ENCODE measurements at regions of chr1 and their contacts with region 1.

Region 1: GRCh38 chr1:178725603-178726517 is 816 bp downstream of the RALGPS2 start:
- DNase-seq: peak; percentile 88
- ATAC-seq: peak; percentile 80
- H3K4me3 ChIP-seq: peak overlapping the region; percentile 93
- H3K27ac ChIP-seq: peak overlapping the region; percentile 76
- H3K4me1 ChIP-seq: peaks cover 24% of the 10 kb centered on the region
- H3K27me3 ChIP-seq: no peaks in the 10 kb centered on the region
- CTCF ChIP-seq: no peak; the same call in 1 of the 2 replicates

Region 2: DNA sequence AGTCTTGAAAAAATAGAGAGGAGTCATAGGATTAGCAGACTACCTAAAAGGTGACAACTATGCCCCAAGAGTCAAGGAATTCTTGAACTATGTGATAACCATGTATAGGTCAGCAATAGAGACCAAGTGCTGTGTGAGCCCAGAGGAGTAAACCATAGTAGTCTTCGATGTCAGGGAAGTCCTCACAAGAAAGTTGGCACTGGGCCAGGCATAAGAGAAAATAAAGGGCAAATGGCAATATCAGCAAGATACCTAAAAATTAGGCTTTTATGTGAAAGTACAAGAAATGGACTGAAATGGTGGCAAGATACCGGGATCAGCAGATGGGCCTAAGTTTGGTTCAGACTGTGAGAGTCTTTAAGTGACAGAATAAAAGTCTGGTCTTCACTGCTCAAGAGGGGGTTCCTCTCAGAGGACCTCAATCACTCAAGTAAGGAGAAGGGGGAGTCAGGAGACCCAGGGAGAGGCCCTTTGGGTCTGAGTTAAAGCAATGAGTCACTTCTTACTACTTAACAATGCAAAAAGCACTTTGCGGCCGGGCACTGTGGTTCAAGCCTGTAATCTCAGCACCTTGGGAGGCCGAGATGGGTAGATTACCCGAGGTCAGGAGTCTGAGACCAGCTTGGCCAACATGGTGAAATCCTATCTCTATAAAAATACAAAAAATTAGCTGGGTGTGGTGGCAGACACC is 118.0 kb before region 1 on chr1:
- CTCF ChIA-PET with region 1: no interaction called
- POLR2A ChIA-PET with region 1: interaction called, 16 read pairs
- intact Hi-C with region 1: loop called (anchors 2 kb)
- DNase-seq: no peak
- ATAC-seq: no peak
- H3K4me3 ChIP-seq: no peak overlapping the region
- H3K27ac ChIP-seq: peak overlapping the region; percentile 97
- H3K4me1 ChIP-seq: peaks cover 52% of the 10 kb centered on the region
- H3K27me3 ChIP-seq: no peaks in the 10 kb centered on the region
- CTCF ChIP-seq: no peak

Region 3: GRCh38 chr1:178650934-178651511 is 74.8 kb before region 1 on chr1:
- CTCF ChIA-PET with region 1: interaction called, 4 read pairs
- POLR2A ChIA-PET with region 1: interaction called, 18 read pairs
- intact Hi-C with region 1: loop called (anchors 1 kb)
- DNase-seq: peak; percentile 85
- ATAC-seq: peak; percentile 70
- H3K4me3 ChIP-seq: no peak overlapping the region
- H3K27ac ChIP-seq: peak overlapping the region; percentile 95
- H3K4me1 ChIP-seq: peaks cover 57% of the 10 kb centered on the region
- H3K27me3 ChIP-seq: no peaks in the 10 kb centered on the region
- CTCF ChIP-seq: no peak

Region 4: GRCh38 chr1:178684542-178685000 is 41.3 kb before region 1 on chr1:
- CTCF ChIA-PET with region 1: no interaction called
- POLR2A ChIA-PET with region 1: interaction called, 3 read pairs
- intact Hi-C with region 1: loop called (anchors 5 kb)
- DNase-seq: peak; percentile 90
- ATAC-seq: peak; percentile 88
- H3K4me3 ChIP-seq: no peak overlapping the region
- H3K27ac ChIP-seq: peak overlapping the region; percentile 74
- H3K4me1 ChIP-seq: peaks cover 47% of the 10 kb centered on the region
- H3K27me3 ChIP-seq: no peaks in the 10 kb centered on the region
- CTCF ChIP-seq: no peak

Region 5: GRCh38 chr1:179229214-179230140 is 503.6 kb after region 1 on chr1 and contains the start of gene ABL2:
- CTCF ChIA-PET with region 1: interaction called, 10 read pairs
- POLR2A ChIA-PET with region 1: no interaction called
- intact Hi-C with region 1: no loop called
- DNase-seq: peak; percentile 44
- ATAC-seq: peak; percentile 47
- H3K4me3 ChIP-seq: peak within 1 kb of the TSS; percentile 94
- H3K27ac ChIP-seq: peak within 1 kb of the TSS; percentile 83
- H3K4me1 ChIP-seq: peaks cover 33% of the 10 kb centered on the region
- H3K27me3 ChIP-seq: no peaks in the 10 kb centered on the region
- CTCF ChIP-seq: no peak
- total RNA-seq, gene ABL2: 15.9 and 19.2 TPM in 2 replicates

Region 6: GRCh38 chr1:180080433-180080832 is 1354.6 kb after region 1 on chr1:
- CTCF ChIA-PET with region 1: interaction called, 19 read pairs
- POLR2A ChIA-PET with region 1: no interaction called
- intact Hi-C with region 1: no loop called
- DNase-seq: peak; percentile 82
- ATAC-seq: peak; percentile 93
- H3K4me3 ChIP-seq: no peak overlapping the region
- H3K27ac ChIP-seq: peak overlapping the region; percentile 58
- H3K4me1 ChIP-seq: peaks cover 26% of the 10 kb centered on the region
- H3K27me3 ChIP-seq: no peaks in the 10 kb centered on the region
- CTCF ChIP-seq: no peak

Measured in PC-3 (cell line).